ENCODE measurements at regions of chr20 and their contacts with region 1.

Region 1: DNA sequence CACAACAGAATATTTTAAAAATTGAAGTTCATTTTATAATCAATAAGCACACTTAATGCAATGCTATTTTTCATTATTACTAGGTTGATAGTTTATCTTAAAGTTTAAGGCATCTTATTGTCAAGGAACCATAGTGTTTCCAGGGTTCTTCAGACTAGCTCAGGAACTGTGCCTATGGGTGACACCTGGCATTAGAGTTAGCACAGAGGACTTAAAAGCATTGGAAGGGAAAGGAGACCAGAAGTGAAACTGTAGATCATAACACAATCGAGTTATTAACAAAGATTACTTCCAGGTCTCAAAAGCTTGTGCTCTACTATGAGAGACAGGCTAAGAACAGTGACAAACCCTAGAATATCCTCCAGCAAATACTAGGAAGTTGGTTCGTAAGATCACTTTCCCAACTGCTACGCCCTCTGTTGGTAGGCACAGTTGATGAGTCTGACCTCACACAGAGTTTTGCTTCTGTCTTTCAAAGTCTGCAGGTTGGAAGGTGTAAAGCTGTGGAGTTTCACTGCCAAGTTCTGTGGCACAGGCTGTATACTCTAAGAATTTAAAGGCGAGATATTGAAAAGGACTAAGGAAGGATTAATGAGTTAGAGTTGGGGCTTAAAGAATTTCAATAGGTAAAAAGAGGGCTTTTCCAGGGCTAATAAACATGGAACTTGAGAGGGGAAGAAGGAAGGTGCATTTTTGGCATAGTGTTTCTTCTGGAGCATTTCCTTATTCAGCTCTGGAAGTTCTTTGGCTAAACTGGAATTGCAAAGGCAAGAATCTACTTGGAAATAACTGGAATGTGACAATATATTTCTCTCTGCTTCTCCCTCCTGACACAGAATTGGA is 531.3 kb upstream of the JAG1 start:
- DNase-seq: peak; percentile 79
- H3K4me3 ChIP-seq: no peak overlapping the region
- H3K27ac ChIP-seq: no peak overlapping the region
- H3K4me1 ChIP-seq: no peaks in the 10 kb centered on the region
- H3K27me3 ChIP-seq: no peaks in the 10 kb centered on the region
- CTCF ChIP-seq: peak; percentile 78 to 87
- POLR2A ChIP-seq: no peak

Region 2: DNA sequence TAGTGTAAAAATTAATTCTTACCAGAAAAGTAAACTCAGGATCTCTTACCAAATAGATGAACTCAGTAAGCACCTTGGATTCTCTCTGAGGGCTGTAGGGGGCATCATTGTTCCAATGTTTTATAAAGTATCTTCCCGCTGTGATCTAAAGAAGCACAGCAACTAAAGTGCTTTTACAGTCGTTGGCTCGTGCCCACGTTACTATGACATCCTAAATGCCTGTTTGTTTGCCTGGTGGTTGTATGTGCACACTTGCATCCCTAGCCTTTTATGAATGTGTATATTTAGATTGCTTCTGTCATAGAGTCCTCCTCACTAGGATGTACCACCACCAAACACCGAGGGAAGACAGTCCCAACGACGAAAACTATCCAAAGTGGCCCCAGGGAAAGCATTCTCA is 735.5 kb before region 1 on chr20:
- CTCF ChIA-PET with region 1: interaction called, 3 read pairs
- POLR2A ChIA-PET with region 1: no interaction called
- dilution Hi-C with region 1: no loop called
- intact Hi-C with region 1: loop called (anchors 5 kb)
- DNase-seq: peak; percentile 90
- H3K4me3 ChIP-seq: no peak overlapping the region
- H3K27ac ChIP-seq: peak overlapping the region; percentile 9
- H3K4me1 ChIP-seq: peaks cover 40% of the 10 kb centered on the region
- H3K27me3 ChIP-seq: no peaks in the 10 kb centered on the region
- CTCF ChIP-seq: peak; percentile 49 to 50
- POLR2A ChIP-seq: no peak

Region 3: GRCh38 chr20:10864076-10864918 is 340.9 kb before region 1 on chr20:
- CTCF ChIA-PET with region 1: no interaction called
- POLR2A ChIA-PET with region 1: no interaction called
- dilution Hi-C with region 1: no loop called
- intact Hi-C with region 1: loop called (anchors 10 kb)
- DNase-seq: peak; percentile 48
- H3K4me3 ChIP-seq: no peak overlapping the region
- H3K27ac ChIP-seq: peak overlapping the region; percentile 59
- H3K4me1 ChIP-seq: peaks cover 32% of the 10 kb centered on the region
- H3K27me3 ChIP-seq: no peaks in the 10 kb centered on the region
- CTCF ChIP-seq: no peak
- POLR2A ChIP-seq: no peak

Region 4: DNA sequence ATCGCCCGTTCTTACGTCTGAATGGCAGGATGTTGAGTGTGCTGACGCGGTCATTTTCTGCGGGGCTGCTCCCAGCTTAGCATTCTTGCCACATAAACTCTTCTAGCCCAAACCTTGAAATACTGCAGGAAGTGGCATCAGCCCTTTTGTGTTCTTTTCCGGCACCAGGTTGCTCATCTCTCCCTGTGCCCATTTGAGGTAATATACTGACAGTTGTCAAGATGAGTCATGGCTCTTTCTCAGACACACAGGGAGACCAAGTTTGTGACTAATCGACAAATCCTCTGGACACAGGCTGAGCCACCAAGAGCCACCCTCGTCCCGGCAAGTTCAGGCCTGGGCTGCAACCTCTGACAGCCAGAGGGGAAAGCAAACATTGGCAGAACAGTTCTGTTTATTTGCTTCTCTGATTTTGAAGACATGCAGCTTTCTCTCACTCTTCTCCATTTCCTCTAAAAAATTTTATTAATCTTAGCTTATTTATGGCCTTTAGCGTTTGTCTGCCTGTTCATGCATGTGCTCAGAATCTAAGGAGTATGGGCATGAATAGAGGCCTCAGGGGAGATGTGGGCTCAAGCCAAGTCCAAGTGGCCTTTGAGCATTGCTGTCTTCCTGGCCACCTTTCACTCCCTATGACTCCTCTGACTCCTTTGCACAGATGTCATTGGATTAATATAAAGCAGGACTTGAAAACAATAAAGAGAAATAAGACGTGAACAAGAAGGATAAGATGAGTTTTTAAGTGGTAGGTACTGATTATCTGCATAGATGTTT is 203.2 kb before region 1 on chr20:
- CTCF ChIA-PET with region 1: interaction called, 6 read pairs
- POLR2A ChIA-PET with region 1: no interaction called
- dilution Hi-C with region 1: no loop called
- intact Hi-C with region 1: loop called (anchors 5 kb)
- DNase-seq: peak; percentile 71
- H3K4me3 ChIP-seq: no peak overlapping the region
- H3K27ac ChIP-seq: peak overlapping the region; percentile 50
- H3K4me1 ChIP-seq: peaks cover 29% of the 10 kb centered on the region
- H3K27me3 ChIP-seq: no peaks in the 10 kb centered on the region
- CTCF ChIP-seq: no peak
- POLR2A ChIP-seq: no peak

Region 5: GRCh38 chr20:11216451-11217314 is 11.5 kb after region 1 on chr20:
- CTCF ChIA-PET with region 1: interaction called, 38 read pairs
- POLR2A ChIA-PET with region 1: no interaction called
- dilution Hi-C with region 1: no loop called
- intact Hi-C with region 1: no loop called
- DNase-seq: peak; percentile 88
- H3K4me3 ChIP-seq: no peak overlapping the region
- H3K27ac ChIP-seq: peak overlapping the region; percentile 74
- H3K4me1 ChIP-seq: peaks cover 33% of the 10 kb centered on the region
- H3K27me3 ChIP-seq: no peaks in the 10 kb centered on the region
- CTCF ChIP-seq: no peak
- POLR2A ChIP-seq: no peak

Region 6: GRCh38 chr20:11544029-11544678 is 339.0 kb after region 1 on chr20:
- CTCF ChIA-PET with region 1: interaction called, 13 read pairs
- POLR2A ChIA-PET with region 1: interaction called, 3 read pairs
- dilution Hi-C with region 1: no loop called
- intact Hi-C with region 1: loop called (anchors 5 kb)
- DNase-seq: peak; percentile 74
- H3K4me3 ChIP-seq: no peak overlapping the region
- H3K27ac ChIP-seq: no peak overlapping the region
- H3K4me1 ChIP-seq: peaks cover 9% of the 10 kb centered on the region
- H3K27me3 ChIP-seq: no peaks in the 10 kb centered on the region
- CTCF ChIP-seq: peak; percentile 16 to 44
- POLR2A ChIP-seq: no peak